ENCODE measurements at regions of chr10 and their contacts with region 1.

Region 1: DNA sequence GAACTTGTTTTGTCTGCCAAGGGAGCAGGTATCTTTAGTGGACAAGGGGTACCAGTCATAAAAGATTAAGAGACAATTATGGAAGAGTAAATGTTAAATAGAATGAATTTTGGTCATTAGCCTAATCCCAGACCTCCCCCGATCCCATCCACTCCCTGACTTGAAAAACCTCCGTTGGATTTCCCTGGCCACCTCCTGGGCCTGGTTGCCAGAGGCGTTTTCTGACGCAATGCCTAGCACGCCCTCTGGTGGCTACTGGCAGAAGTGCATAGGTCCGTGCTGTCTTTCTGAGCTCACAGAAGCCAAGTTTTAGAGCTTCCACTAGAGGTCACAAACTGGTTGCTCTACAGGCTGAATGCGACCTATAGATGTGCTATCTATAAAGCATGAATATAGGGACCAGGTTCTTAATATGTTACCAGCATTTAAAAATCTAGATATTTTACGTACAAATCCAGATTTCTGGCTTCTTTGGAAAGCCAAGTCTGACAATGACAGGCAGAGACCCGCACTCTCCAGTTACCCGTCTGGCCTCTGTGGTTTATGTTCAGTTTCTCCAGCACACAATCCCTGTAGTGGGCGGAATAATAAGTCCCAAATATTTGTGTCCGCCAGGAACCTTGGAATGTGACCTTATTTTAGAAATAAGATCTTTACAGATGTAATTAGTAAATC is 39.8 kb downstream of the SPOCK2 start:
- DNase-seq: peak; percentile 93
- H3K4me3 ChIP-seq: no peak overlapping the region
- H3K27ac ChIP-seq: no peak overlapping the region
- H3K4me1 ChIP-seq: no peaks in the 10 kb centered on the region
- H3K27me3 ChIP-seq: no peaks in the 10 kb centered on the region
- CTCF ChIP-seq: peak; percentile 99 to 100 (median 100)
- POLR2A ChIP-seq: no peak

Region 2: DNA sequence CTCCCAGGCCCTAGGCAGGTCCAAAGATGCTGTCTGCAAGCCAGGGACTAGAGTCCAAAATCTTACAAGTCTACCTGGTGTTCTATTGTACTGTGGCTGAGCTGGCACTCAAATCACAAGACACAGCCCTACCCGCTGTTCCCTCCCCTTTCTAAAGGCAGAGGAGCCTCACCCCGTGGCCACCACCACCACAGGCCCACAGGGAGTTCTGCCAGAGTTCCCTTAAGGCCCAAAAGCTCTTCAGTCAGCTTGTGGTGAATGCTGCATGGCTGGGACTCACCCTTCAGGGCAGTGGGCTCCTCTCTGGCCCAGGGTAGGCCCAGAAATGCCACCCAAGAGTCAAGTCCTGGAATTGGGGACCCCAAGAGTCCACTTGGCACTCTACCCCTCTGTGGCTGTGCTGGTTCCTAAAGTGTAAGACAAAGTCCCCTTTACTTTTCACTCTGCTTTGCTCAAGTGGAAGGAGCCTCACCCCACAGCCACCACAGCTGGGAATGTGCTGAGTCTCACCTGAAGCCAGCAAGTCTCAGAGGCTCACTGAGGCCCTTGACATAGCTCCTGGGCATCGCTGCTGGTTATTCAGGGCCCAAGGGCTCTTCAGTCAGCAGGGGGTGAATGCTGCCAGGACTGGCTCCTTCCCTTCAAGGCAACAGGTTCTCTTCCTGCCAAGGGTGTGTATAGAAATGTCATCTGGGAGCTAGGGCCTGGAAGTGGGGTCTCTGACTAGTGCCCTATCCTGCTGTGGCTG is 148.7 kb before region 1 on chr10:
- intact Hi-C with region 1: loop called (anchors 5 kb)
- DNase-seq: no peak
- H3K4me3 ChIP-seq: no peak overlapping the region
- H3K27ac ChIP-seq: no peak overlapping the region
- H3K4me1 ChIP-seq: no peaks in the 10 kb centered on the region
- H3K27me3 ChIP-seq: no peaks in the 10 kb centered on the region
- CTCF ChIP-seq: no peak
- POLR2A ChIP-seq: no peak

Region 3: GRCh38 chr10:71963756-71964668 is 84.6 kb before region 1 on chr10 and contains the start of gene CHST3:
- intact Hi-C with region 1: loop called (anchors 2 kb)
- DNase-seq: peak; percentile 41
- H3K4me3 ChIP-seq: peak within 1 kb of the TSS; percentile 61 to 65
- H3K27ac ChIP-seq: peak within 1 kb of the TSS; percentile 89 to 90
- H3K4me1 ChIP-seq: peaks cover 2% of the 10 kb centered on the region
- H3K27me3 ChIP-seq: no peaks in the 10 kb centered on the region
- CTCF ChIP-seq: no peak
- POLR2A ChIP-seq: peak; percentile 23
- total RNA-seq, gene CHST3: 16.5 to 197 TPM

Region 4: GRCh38 chr10:72079356-72079755 is 30.8 kb after region 1 on chr10:
- intact Hi-C with region 1: no loop called
- DNase-seq: no peak
- H3K4me3 ChIP-seq: no peak overlapping the region
- H3K27ac ChIP-seq: no peak overlapping the region
- H3K4me1 ChIP-seq: no peaks in the 10 kb centered on the region
- H3K27me3 ChIP-seq: no peaks in the 10 kb centered on the region
- CTCF ChIP-seq: no peak
- POLR2A ChIP-seq: no peak

Region 5: DNA sequence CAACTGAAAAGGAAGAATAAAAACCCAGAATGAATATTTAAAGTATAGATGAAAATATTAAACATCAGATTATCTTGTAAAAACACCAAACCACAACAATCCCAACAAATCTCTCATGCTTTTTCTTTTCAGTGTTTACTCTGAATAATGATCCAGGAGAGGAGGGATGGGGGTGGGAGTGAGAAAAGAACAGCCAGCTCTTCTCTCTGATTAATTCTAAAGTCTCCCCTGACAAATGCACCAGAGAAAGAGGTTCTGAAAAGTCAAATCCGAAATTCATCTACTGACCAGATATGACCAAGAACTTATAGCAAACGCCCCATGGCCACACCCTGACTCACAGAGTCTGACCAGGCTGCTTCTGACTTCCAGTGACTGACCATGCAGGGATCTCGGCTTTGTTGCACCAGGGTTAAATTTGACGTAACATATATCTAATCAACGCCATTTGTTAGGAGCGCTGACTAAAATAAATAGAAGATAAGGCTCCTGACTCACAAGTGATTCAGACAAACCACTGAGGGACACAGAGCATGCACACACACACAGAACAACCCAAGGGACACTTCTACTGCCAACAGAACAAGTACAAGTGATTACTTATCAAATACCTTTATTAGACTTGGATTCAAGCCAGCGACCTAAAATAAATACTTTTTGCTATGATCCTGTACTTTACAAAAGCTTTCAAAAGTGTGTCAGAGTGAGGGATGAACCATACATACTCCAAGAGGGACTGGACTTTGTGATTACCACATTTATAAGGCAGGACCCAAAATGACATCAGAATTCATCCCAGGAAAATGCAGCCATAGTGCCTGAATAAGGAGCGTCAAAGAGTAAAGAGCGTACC is 49.1 kb after region 1 on chr10:
- intact Hi-C with region 1: no loop called
- DNase-seq: no peak
- H3K4me3 ChIP-seq: no peak overlapping the region
- H3K27ac ChIP-seq: no peak overlapping the region
- H3K4me1 ChIP-seq: no peaks in the 10 kb centered on the region
- H3K27me3 ChIP-seq: no peaks in the 10 kb centered on the region
- CTCF ChIP-seq: no peak
- POLR2A ChIP-seq: no peak

Region 6: GRCh38 chr10:72337020-72337629 is 288.5 kb after region 1 on chr10:
- intact Hi-C with region 1: loop called (anchors 2 kb)
- DNase-seq: peak; percentile 79
- H3K4me3 ChIP-seq: no peak overlapping the region
- H3K27ac ChIP-seq: peak overlapping the region; percentile 86 to 87
- H3K4me1 ChIP-seq: peaks cover 29% of the 10 kb centered on the region
- H3K27me3 ChIP-seq: no peaks in the 10 kb centered on the region
- CTCF ChIP-seq: peak; percentile 89 to 98 (median 96)
- POLR2A ChIP-seq: no peak

Measured in prostate gland (tissue), 2 donors.